ENCODE measurements at regions of chr22 and their contacts with region 1.

Region 1: DNA sequence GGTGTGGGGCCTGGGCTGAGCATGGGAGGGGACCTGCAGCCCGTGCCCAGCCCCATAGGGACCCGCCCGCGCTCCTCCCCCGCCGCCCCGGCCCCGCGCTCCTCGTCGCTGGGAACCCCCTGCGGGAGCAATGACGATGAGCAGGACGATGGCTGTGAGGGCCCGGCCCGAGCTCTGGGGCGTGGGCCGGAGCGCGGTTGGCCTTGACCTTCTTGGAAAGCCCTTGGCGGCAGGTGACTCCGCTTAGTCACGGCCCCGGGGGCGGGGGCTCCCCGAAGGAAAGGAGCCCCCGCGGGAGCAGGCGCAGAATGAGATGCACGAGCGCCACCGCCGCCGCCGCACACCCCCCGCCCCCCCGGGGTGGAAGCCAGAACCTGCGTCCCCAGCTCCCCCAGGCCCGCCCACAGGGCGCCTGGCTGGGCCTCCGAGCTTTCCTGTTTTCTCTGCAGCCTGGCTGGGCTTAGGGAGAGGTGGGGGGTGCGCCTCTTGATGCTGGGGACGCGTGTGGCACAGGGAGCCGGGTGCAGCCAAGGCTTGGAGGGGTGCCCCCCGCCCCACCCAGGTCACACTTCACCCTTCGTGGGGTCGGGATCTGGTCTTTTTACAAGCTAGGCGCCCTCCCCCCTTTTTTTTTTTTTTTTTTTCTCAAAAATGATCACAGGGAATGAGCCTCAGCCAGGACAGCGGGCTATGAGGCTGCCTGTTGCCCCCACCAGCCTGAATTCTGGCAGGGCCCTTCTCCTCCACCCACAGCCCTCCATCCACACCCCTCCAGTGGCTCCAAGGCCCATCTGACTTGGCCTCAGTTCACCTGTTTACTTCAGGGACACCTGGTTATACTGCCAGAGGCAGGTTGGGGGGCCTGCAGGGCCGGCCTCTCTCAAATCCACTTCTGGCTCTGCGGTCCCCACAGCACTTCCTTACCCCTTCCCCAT is 17.9 kb downstream of the CRELD2 start:
- DNase-seq: peak; percentile 92
- ATAC-seq: peak; percentile 75
- H3K4me3 Mint-ChIP-seq: peak overlapping the region; percentile 61
- H3K27ac Mint-ChIP-seq: peak overlapping the region; percentile 82
- H3K4me1 Mint-ChIP-seq: peaks cover 42% of the 10 kb centered on the region
- H3K27me3 Mint-ChIP-seq: no peaks in the 10 kb centered on the region
- CTCF ChIP-seq: no peak

Region 2: GRCh38 chr22:49815641-49816071 is 120.6 kb before region 1 on chr22:
- CTCF ChIA-PET with region 1: no interaction called
- POLR2A ChIA-PET with region 1: no interaction called
- intact Hi-C with region 1: no loop called
- DNase-seq: no peak
- ATAC-seq: no peak
- H3K4me3 Mint-ChIP-seq: no peak overlapping the region
- H3K27ac Mint-ChIP-seq: no peak overlapping the region
- H3K4me1 Mint-ChIP-seq: peaks cover 44% of the 10 kb centered on the region
- H3K27me3 Mint-ChIP-seq: no peaks in the 10 kb centered on the region
- CTCF ChIP-seq: no peak

Region 3: DNA sequence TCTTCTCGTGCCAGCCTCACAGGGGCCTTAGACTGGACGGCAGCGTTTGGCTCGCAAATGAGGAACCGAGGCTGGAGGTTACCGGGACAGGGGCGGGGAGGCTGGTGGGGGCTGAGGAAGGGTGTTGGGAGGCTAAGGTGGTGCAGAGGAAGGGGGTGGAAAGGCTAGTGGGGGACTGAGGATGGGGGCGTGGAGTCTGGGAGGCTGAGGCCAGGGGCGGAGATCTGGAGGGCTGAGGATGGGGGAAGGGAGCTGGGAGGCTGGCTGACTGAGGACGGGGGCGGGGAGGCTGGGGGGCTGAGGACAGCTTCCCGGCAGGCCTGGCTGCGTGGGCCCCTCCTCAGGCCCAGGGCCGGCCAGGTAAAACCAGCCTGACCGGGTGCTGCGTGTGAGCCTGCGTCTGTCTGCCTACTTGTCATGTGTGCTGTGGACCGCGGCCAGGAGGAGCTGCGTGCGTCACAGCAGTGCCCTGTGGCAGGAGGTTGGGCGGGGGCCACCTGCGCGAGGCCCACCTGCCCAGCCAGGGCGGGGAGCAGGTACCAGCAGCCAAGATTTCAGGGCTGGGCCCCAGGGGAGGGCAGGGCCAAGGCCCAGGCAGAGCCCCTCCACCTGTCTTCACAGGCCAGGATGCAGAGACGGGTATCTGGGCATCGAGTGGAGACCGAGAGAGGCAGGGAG is 14.9 kb after region 1 on chr22:
- CTCF ChIA-PET with region 1: interaction called, 3 read pairs
- POLR2A ChIA-PET with region 1: interaction called, 828 read pairs
- intact Hi-C with region 1: no loop called
- DNase-seq: no peak
- ATAC-seq: peak; percentile 79
- H3K4me3 Mint-ChIP-seq: no peak overlapping the region
- H3K27ac Mint-ChIP-seq: no peak overlapping the region
- H3K4me1 Mint-ChIP-seq: peaks cover 2% of the 10 kb centered on the region
- H3K27me3 Mint-ChIP-seq: no peaks in the 10 kb centered on the region
- CTCF ChIP-seq: no peak

Region 4: GRCh38 chr22:49970528-49971231 is 34.4 kb after region 1 on chr22:
- CTCF ChIA-PET with region 1: interaction called, 4 read pairs
- POLR2A ChIA-PET with region 1: interaction called, 828 read pairs
- intact Hi-C with region 1: loop called (anchors 2 kb)
- DNase-seq: peak; percentile 81
- ATAC-seq: peak; percentile 89
- H3K4me3 Mint-ChIP-seq: peak overlapping the region; percentile 80
- H3K27ac Mint-ChIP-seq: peak overlapping the region; percentile 85
- H3K4me1 Mint-ChIP-seq: peaks cover 38% of the 10 kb centered on the region
- H3K27me3 Mint-ChIP-seq: no peaks in the 10 kb centered on the region
- CTCF ChIP-seq: no peak

Region 5: DNA sequence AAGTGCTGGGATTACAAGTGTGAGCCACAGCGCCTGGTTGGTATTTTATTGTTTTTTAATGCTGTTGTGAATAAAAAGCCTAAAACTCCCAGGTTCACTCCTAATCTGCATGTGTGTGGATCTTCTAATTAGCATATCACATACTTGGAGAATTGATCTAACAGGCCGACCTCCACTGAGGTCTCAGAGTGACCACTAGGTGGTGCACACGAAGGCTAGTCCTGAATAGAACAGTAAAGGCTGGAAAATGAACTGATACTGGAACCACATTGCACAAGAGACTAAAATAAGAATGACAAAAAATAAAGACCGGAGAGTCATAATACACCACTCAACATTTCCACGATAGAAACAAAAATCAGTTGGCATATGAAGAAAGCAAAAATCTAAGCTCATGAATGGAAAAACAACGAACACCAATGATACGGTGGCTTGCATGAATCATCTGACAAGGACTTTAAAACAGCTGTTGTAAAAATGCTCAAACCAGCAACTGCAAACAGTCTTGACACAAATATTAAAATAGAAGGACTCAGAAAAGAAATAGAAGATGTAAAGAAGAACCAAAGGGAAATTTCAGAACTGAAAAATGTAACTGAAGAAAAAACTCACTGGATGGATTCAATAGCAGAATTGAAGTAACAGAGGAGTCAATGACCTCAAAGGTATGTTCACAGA is 43.4 kb after region 1 on chr22:
- CTCF ChIA-PET with region 1: interaction called, 10 read pairs
- POLR2A ChIA-PET with region 1: interaction called, 25 read pairs
- intact Hi-C with region 1: loop called (anchors 2 kb)
- DNase-seq: no peak
- ATAC-seq: no peak
- H3K4me3 Mint-ChIP-seq: no peak overlapping the region
- H3K27ac Mint-ChIP-seq: peak overlapping the region; percentile 14
- H3K4me1 Mint-ChIP-seq: peaks cover 33% of the 10 kb centered on the region
- H3K27me3 Mint-ChIP-seq: peaks cover 2% of the 10 kb centered on the region
- CTCF ChIP-seq: no peak

Measured in activated B cell treated with CpG ODN at 0.5 μM for 24 hours (primary cell).